Activated CD8-positive, alpha-beta T cell treated with anti-CD3 and anti-CD28 coated beads for 36 hours (primary cell): ENCODE measurements at regions of chr15 and their contacts with region 1.

Region 1: GRCh38 chr15:77821188-77821958 is 188.7 kb upstream of the LINGO1 start:
- DNase-seq: peak; percentile 66
- ATAC-seq: peak; percentile 80
- H3K4me3 Mint-ChIP-seq: no peak overlapping the region
- H3K27ac Mint-ChIP-seq: no peak overlapping the region
- H3K4me1 Mint-ChIP-seq: peaks cover 2% of the 10 kb centered on the region
- H3K27me3 Mint-ChIP-seq: peaks cover 38% of the 10 kb centered on the region
- CTCF ChIP-seq: peak; percentile 57

Region 2: GRCh38 chr15:77659350-77660321 is 161.7 kb before region 1 on chr15:
- CTCF ChIA-PET with region 1: interaction called, 7 read pairs
- POLR2A ChIA-PET with region 1: interaction called, 3 read pairs
- intact Hi-C with region 1: loop called (anchors 10 kb)
- DNase-seq: peak; percentile 76
- ATAC-seq: peak; percentile 89
- H3K4me3 Mint-ChIP-seq: no peak overlapping the region
- H3K27ac Mint-ChIP-seq: no peak overlapping the region
- H3K4me1 Mint-ChIP-seq: no peaks in the 10 kb centered on the region
- H3K27me3 Mint-ChIP-seq: peaks cover 8% of the 10 kb centered on the region
- CTCF ChIP-seq: peak; percentile 66

Region 3: DNA sequence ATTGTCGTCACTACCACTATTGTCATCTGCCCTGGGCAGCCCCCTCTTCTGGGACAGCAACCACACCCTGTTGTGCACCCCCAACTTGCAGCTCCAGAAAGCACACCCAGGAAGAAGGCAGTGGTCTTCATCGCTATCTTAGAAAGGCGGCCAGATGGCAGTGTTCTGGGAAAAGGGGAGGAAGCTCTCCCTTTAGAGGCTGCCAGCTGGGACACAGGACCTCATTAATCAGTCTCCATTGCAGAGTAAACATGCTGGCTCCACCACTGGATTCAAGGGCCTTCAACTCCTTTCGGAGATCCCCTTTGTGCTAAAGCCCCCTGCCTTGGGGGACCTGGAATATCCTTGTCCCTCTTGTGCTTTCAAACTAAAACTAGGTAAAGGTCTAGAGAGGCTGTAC is 10.6 kb after region 1 on chr15:
- CTCF ChIA-PET with region 1: interaction called, 12 read pairs
- POLR2A ChIA-PET with region 1: no interaction called
- intact Hi-C with region 1: no loop called
- DNase-seq: no peak
- ATAC-seq: no peak
- H3K4me3 Mint-ChIP-seq: no peak overlapping the region
- H3K27ac Mint-ChIP-seq: no peak overlapping the region
- H3K4me1 Mint-ChIP-seq: no peaks in the 10 kb centered on the region
- H3K27me3 Mint-ChIP-seq: peaks cover 4% of the 10 kb centered on the region
- CTCF ChIP-seq: no peak

Region 4: DNA sequence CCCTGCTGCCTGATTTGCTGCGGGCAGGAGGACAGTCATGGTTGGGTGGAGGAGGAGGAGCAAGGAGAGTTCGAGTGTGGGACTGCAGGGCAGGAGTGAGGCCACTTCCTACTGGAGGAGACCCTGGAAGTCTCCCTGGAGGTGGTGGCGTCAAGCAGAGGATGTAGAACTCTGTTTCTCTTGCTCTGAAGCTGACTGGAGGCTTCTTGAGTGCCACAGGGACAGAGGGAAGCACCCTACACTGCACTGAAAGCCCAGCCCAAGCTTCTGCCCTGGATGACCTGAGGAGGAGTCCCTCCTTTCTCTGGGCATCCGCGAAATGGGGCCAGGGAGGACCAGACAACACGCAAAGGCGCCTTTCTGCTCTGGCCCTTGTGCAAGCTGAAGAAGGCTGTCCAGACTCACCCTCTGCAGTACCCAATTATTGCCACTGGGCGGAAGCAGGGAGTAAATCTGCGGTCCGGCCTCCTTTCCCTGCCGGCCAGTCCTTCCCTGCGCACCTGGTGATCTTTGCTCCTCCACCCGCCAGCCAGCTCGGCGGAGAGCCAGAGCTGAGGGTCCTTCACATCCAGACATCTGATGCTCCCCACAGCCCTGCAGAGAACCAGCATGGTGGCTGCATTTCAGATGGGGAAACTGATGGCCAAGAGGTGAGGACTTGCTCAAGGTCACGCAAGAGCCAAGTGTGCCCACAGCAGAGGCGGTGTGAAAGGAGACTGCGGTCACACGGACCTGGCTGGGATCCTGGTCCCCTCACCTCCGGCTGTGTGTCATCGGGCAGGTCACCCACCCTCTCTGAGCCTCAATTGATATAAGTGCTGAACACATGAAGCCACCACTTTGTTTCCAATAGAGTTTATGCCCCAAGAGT is 49.1 kb after region 1 on chr15:
- CTCF ChIA-PET with region 1: no interaction called
- POLR2A ChIA-PET with region 1: no interaction called
- intact Hi-C with region 1: no loop called
- DNase-seq: peak; percentile 64
- ATAC-seq: peak; percentile 80
- H3K4me3 Mint-ChIP-seq: no peak overlapping the region
- H3K27ac Mint-ChIP-seq: no peak overlapping the region
- H3K4me1 Mint-ChIP-seq: no peaks in the 10 kb centered on the region
- H3K27me3 Mint-ChIP-seq: no peaks in the 10 kb centered on the region
- CTCF ChIP-seq: peak; percentile 88